Left ventricle myocardium inferior (tissue), 1 donor: ENCODE measurements at regions of chr3 and their contacts with region 1.

Region 1: DNA sequence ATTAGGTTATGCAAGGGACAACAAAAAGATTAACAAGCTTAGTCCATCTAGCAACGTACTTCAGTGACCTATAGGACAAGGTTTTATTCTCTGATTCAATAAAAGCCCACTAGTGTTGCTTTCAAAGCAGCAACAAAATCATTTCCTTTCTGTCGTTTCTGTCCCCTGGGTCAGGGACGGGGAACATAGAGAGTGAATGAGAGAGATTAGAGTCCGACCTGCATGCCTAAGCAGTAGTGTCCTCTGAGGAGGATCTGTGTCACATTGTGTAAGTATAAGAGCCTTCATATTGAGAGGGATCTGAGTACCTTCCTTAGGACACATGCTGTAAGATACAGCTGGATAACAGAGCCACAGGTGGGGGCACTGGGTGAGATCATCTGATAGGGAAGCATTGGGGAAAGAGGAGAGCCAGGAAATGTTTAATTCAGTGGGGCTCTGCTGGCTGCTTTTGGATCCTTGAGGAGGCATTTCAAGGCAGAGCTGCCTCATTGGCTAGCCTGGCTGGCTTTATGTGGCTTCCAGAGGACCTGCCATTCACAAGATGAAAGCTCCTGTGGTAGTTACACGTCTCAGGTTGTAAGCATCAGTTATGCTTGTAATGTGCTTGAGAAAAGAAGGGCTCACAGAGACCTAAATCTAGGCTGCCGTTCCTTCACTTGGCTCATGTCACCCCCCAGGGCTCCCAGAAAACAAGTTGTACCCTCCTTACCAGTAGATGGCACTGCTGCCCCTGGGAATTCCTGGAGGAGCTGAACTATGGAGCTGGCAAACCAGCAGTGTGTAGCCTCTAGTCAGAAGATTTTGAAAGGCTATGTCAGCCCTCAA is 2.7 kb downstream of the TMEM108 start:
- DNase-seq: peak; percentile 54
- H3K4me3 ChIP-seq: peak overlapping the region; percentile 24
- H3K27ac ChIP-seq: peak overlapping the region; percentile 15
- H3K4me1 ChIP-seq: peaks cover 15% of the 10 kb centered on the region
- H3K27me3 ChIP-seq: peaks cover 55% of the 10 kb centered on the region
- CTCF ChIP-seq: peak; percentile 73

Region 2: GRCh38 chr3:132730891-132731580 is 309.9 kb before region 1 on chr3:
- intact Hi-C with region 1: loop called (anchors 5 kb)
- DNase-seq: no peak
- H3K4me3 ChIP-seq: no peak overlapping the region
- H3K27ac ChIP-seq: no peak overlapping the region
- H3K4me1 ChIP-seq: peaks cover 6% of the 10 kb centered on the region
- H3K27me3 ChIP-seq: peaks cover 5% of the 10 kb centered on the region
- CTCF ChIP-seq: peak; percentile 60

Region 3: GRCh38 chr3:132964266-132964665 is 76.6 kb before region 1 on chr3:
- intact Hi-C with region 1: no loop called
- DNase-seq: no peak
- H3K4me3 ChIP-seq: no peak overlapping the region
- H3K27ac ChIP-seq: no peak overlapping the region
- H3K4me1 ChIP-seq: no peaks in the 10 kb centered on the region
- H3K27me3 ChIP-seq: no peaks in the 10 kb centered on the region
- CTCF ChIP-seq: no peak

Region 4: DNA sequence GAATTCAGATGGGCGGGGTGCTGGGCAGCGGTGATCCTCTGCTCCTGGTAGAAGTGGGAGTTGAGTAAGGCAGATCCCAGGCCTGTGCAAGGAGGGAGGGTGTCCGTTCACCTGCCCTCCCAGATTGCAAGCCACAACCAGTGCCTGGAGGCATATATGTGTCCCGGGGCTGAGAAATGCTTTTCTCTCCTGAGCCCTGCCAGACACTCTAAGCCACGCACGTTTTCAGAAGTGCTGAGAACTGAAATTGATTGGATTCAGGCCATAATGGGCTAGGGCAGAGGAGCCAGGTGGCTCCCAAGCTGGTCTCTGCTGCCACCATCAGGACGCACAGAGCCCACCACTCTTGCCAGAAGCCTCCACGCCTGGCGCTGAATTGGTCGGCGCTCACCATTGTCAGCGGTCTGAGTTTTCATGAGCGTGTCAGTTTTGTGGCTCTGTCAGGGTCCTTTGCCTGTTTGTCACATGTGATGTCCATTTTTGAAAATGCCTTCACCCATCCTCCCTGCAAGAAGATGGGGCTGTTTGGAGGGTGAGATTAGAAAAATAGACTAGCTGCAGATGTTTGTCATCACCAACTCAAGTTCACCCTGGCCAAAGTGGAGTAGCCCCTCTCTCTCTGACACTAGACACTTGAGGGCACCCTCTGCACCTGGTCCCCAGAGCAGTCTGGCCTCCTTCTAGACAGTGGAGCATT is 343.6 kb after region 1 on chr3:
- intact Hi-C with region 1: loop called (anchors 5 kb)
- DNase-seq: peak; percentile 38
- H3K4me3 ChIP-seq: no peak overlapping the region
- H3K27ac ChIP-seq: no peak overlapping the region
- H3K4me1 ChIP-seq: peaks cover 5% of the 10 kb centered on the region
- H3K27me3 ChIP-seq: peaks cover 25% of the 10 kb centered on the region
- CTCF ChIP-seq: peak; percentile 87